Naive thymus-derived CD4-positive, alpha-beta T cell (primary cell): ENCODE measurements at regions of chr7 and their contacts with region 1.

Region 1: GRCh38 chr7:139777948-139778841 is at the start of gene HIPK2:
- DNase-seq: peak; percentile 54 to 75 (median 67)
- ATAC-seq: peak; percentile 79
- H3K4me3 ChIP-seq: peak within 1 kb of the TSS; percentile 85
- H3K4me3 Mint-ChIP-seq: peak within 1 kb of the TSS; percentile 94 to 100 (median 98)
- H3K27ac ChIP-seq: peak within 1 kb of the TSS; percentile 89
- H3K27ac Mint-ChIP-seq: peak within 1 kb of the TSS; percentile 95 to 98 (median 97)
- H3K4me1 ChIP-seq: peaks cover 4 to 26% of the 10 kb centered on the region in 2 donors
- H3K4me1 Mint-ChIP-seq: peaks cover 41 to 53% (median 49%) of the 10 kb centered on the region in 7 donors
- H3K27me3 ChIP-seq: no peaks in the 10 kb centered on the region
- H3K27me3 Mint-ChIP-seq: peaks cover 0 to 24% (median 5%) of the 10 kb centered on the region in 5 donors
- total RNA-seq, gene HIPK2: 27.3 to 44.0 (median 37.3) TPM

Region 2: GRCh38 chr7:139602143-139602722 is 176.0 kb before region 1 on chr7:
- CTCF ChIA-PET with region 1: no interaction called
- POLR2A ChIA-PET with region 1: no interaction called
- intact Hi-C with region 1: no loop called
- DNase-seq: peak in 6 of 9 donors; percentile 16 to 46 (median 44)
- ATAC-seq: peak; percentile 73
- H3K4me3 ChIP-seq: no peak overlapping the region
- H3K4me3 Mint-ChIP-seq: no peak overlapping the region
- H3K27ac ChIP-seq: no peak overlapping the region
- H3K27ac Mint-ChIP-seq: no peak overlapping the region
- H3K4me1 ChIP-seq: no peaks in the 10 kb centered on the region
- H3K4me1 Mint-ChIP-seq: peaks cover 0 to 3% (median 0%) of the 10 kb centered on the region in 7 donors
- H3K27me3 ChIP-seq: no peaks in the 10 kb centered on the region
- H3K27me3 Mint-ChIP-seq: no peaks in the 10 kb centered on the region

Region 3: GRCh38 chr7:139753693-139754111 is 24.5 kb before region 1 on chr7:
- CTCF ChIA-PET with region 1: no interaction called
- POLR2A ChIA-PET with region 1: no interaction called
- intact Hi-C with region 1: loop called in 1 of 2 experiments (anchors 2 kb)
- DNase-seq: no peak
- ATAC-seq: no peak
- H3K4me3 ChIP-seq: no peak overlapping the region
- H3K4me3 Mint-ChIP-seq: peak overlapping the region in 1 of 10 donors; percentile 56
- H3K27ac ChIP-seq: no peak overlapping the region
- H3K27ac Mint-ChIP-seq: peak overlapping the region in 3 of 9 donors; percentile 4 to 60 (median 28)
- H3K4me1 ChIP-seq: no peaks in the 10 kb centered on the region
- H3K4me1 Mint-ChIP-seq: peaks cover 36 to 99% (median 85%) of the 10 kb centered on the region in 7 donors
- H3K27me3 ChIP-seq: no peaks in the 10 kb centered on the region
- H3K27me3 Mint-ChIP-seq: no peaks in the 10 kb centered on the region

Region 4: DNA sequence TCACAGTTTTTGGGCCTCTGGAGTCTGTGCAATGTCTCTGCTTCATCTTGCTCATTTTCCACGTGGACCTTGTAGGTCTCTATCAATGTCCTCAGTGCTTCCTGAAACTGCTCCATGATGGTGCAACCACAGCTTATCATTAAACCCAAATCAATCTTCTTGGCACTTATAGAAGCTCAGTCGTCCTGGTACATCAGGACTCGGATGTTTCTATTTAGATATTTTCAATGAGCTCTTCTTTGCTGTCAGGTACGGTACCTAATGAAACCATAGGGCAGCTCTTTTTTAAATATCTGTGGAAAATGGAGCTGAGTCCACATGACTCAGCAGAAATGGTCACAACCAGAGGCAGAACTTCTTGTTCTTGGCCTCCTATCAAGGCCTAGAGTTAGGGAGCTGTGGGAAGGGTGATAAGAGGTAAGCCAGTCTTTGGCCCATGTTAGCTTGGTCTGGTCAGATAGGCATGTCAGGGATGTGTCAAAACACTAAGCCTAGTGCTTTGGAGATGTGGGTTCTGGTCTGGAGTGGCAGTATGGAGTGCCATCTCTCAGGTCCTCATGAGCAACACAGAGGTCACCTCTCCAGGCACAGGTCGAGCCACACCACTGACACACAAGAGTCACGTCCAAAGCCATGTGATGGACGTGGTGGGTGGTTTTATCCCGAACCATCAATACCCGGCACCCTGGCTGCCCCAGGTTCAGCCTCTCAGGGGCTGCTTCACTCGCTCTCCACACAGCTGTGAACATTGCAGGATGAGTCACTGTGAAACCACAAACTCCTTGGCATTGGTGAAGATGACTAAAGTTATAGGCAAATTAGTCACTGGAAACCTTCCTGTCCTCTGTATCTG is 137.9 kb after region 1 on chr7:
- CTCF ChIA-PET with region 1: no interaction called
- POLR2A ChIA-PET with region 1: no interaction called
- intact Hi-C with region 1: loop called in 1 of 2 experiments (anchors 5 kb)
- DNase-seq: peak in 1 of 9 donors; percentile 66
- ATAC-seq: peak; percentile 90
- H3K4me3 ChIP-seq: no peak overlapping the region
- H3K4me3 Mint-ChIP-seq: peak overlapping the region in 1 of 10 donors; percentile 13
- H3K27ac ChIP-seq: no peak overlapping the region
- H3K27ac Mint-ChIP-seq: peak overlapping the region in 2 of 9 donors; percentile 15 to 31
- H3K4me1 ChIP-seq: peaks cover 0 to 6% of the 10 kb centered on the region in 2 donors
- H3K4me1 Mint-ChIP-seq: peaks cover 0 to 21% (median 6%) of the 10 kb centered on the region in 7 donors
- H3K27me3 ChIP-seq: no peaks in the 10 kb centered on the region
- H3K27me3 Mint-ChIP-seq: peaks cover 0 to 17% (median 0%) of the 10 kb centered on the region in 5 donors

Region 5: GRCh38 chr7:140003913-140004382 is 225.8 kb after region 1 on chr7:
- CTCF ChIA-PET with region 1: no interaction called
- POLR2A ChIA-PET with region 1: no interaction called
- intact Hi-C with region 1: loop called (anchors 1 to 2 kb)
- DNase-seq: peak in 7 of 9 donors; percentile 17 to 42 (median 33)
- ATAC-seq: peak; percentile 37
- H3K4me3 ChIP-seq: no peak overlapping the region
- H3K4me3 Mint-ChIP-seq: no peak overlapping the region
- H3K27ac ChIP-seq: no peak overlapping the region
- H3K27ac Mint-ChIP-seq: peak overlapping the region in 1 of 9 donors; percentile 80
- H3K4me1 ChIP-seq: no peaks in the 10 kb centered on the region
- H3K4me1 Mint-ChIP-seq: peaks cover 0 to 6% (median 0%) of the 10 kb centered on the region in 7 donors
- H3K27me3 ChIP-seq: no peaks in the 10 kb centered on the region
- H3K27me3 Mint-ChIP-seq: no peaks in the 10 kb centered on the region

Region 6: DNA sequence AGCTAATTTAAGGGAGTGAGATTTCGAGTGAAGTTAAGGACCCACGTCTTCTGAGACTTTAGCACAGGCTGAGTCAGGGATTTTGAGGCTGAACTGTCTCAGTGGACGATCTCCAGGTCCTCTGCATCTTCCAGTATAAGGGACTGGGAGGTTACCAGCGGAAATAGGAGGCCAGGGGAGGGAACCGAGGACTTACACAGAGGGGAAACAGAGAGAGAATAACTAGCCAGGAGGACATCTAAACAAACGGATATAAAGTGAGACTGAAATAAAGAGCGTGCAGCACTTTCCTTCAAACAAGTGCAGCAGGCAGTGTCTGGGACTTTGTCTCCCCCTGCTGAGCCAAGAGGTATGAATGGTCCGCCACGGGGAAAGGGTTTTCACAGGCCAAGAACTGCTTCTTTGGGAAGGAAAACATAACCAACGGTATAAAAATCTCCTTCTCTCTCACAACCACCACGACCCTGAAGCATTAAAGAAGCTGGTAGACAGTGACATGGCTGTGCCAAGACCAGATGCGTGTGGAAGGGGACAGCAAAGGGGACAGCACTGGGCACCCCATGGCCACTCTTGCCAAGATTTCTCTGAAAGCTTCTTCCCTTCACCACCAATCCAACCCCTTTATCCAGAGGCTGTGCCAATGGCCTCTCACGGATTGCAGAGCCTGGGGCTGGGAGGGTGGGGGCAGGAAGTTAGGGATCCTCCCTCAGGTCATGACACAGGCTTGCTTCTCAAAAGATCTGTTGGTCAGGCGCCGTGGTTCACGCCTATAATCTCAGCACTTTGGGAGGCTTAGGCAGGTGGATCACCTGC is 548.1 kb after region 1 on chr7:
- CTCF ChIA-PET with region 1: no interaction called
- POLR2A ChIA-PET with region 1: no interaction called
- intact Hi-C with region 1: loop called in 1 of 2 experiments (anchors 5 kb)
- DNase-seq: peak; percentile 16 to 61 (median 54)
- ATAC-seq: peak; percentile 88
- H3K4me3 ChIP-seq: no peak overlapping the region
- H3K4me3 Mint-ChIP-seq: no peak overlapping the region
- H3K27ac ChIP-seq: no peak overlapping the region
- H3K27ac Mint-ChIP-seq: peak overlapping the region in 1 of 9 donors; percentile 76
- H3K4me1 ChIP-seq: peaks cover 4 to 5% of the 10 kb centered on the region in 2 donors
- H3K4me1 Mint-ChIP-seq: peaks cover 0 to 3% (median 0%) of the 10 kb centered on the region in 7 donors
- H3K27me3 ChIP-seq: no peaks in the 10 kb centered on the region
- H3K27me3 Mint-ChIP-seq: no peaks in the 10 kb centered on the region